ENCODE measurements at regions of chr16 and their contacts with region 1.

Region 1: DNA sequence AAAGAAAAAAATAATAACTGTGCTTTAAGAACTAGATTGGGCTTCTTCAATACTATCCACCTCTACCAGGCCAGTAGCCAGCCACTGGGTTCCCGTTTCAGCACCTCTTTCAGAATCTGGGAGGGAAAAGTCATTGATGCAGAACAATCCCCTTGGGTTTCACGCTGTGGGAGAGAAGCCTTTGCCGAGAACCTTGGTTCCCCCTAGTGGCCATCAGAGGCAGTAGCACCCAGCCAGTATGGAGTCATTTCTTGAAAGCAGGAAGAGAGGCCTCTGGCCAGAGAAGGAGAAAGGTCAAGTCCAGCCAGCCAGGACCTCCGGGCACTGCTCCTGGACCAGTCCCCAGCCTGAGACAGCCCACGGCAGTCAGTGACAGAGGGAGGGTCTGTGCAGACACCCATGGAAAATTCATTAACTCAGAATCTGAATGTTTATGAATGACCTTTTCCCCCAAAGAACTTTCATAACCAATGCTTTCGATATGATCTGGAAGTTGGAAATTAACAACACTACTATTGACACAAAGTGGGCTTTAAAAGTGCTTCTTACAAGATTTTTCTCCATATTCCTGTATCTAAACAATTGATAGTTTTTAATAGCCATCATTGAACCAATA is 51.2 kb upstream of the CDH5 start:
- DNase-seq: peak; percentile 63
- ATAC-seq: peak; percentile 88
- H3K4me3 Mint-ChIP-seq: no peak overlapping the region
- H3K27ac Mint-ChIP-seq: no peak overlapping the region
- H3K4me1 Mint-ChIP-seq: peaks cover 4% of the 10 kb centered on the region
- H3K27me3 Mint-ChIP-seq: peaks cover 11% of the 10 kb centered on the region

Region 2: DNA sequence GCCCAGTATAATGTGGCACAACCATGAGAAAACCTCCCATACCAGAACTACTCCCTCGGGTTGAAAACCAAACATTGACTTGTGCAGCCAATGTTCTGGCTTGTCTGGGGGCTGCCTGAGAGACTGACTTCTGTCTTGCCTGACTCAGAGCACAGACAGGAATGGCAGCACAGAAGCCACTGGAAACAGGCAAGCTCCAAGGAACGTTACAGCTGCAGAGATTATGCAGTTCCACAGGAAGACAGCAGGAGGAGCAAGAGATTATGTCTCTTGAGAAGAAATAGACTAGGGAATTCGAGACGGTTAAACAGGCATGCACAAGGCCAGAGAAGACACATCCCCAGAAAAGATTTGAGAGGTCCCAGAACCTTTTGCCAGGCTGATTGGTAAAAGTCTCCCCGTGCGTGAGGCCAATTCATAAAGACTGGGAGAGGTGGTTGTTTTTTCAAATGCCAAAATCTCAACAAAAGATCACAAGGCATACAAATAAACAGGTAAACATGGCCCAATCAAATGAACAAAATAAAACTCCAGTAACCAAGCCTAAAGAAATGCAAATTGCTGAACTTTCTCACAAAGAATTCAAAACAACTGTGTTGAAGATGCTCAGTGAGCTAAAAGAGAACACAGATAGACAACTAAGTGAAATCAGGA is 39.4 kb before region 1 on chr16:
- CTCF ChIA-PET with region 1: interaction called, 10 read pairs
- POLR2A ChIA-PET with region 1: no interaction called
- intact Hi-C with region 1: loop called (anchors 1 kb)
- DNase-seq: peak; percentile 43
- ATAC-seq: no peak
- H3K4me3 Mint-ChIP-seq: no peak overlapping the region
- H3K27ac Mint-ChIP-seq: no peak overlapping the region
- H3K4me1 Mint-ChIP-seq: peaks cover 7% of the 10 kb centered on the region
- H3K27me3 Mint-ChIP-seq: peaks cover 24% of the 10 kb centered on the region

Region 3: DNA sequence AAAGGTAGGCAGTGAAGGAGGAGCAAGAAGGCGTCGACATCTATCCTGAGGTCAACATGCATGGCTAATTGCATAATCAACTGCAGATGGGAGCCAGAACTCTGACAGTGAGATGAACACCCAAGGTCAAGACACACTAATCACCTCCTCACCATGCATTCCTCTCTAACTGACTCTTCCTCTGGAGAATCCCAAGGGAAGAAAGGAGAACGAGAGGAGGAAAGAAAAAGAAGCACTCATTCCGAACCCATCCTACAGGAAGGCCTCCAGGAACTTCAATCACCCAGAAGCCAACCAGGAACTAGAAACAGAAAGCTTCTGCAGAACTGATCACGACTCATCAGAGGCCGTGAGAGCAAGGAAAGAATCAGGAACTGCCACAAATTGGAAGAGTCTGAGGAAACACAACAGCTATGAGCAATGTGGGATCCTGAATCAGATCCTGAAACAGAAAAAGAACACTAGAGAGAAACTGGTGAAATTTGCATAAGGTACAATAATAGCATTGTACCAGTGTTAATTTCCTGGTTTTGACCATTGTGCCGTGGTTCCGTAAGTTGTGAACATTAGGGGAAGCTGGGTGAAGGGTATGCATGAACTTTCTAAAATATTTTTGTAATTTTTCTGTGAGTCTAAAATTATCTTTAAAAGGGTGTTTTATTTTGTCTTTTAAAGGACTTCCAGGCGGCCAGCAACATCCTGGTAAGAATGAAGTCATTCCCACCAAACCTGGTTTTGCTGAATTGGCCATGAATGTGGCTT is 101.8 kb after region 1 on chr16:
- CTCF ChIA-PET with region 1: no interaction called
- POLR2A ChIA-PET with region 1: no interaction called
- intact Hi-C with region 1: no loop called
- DNase-seq: no peak
- ATAC-seq: no peak
- H3K4me3 Mint-ChIP-seq: no peak overlapping the region
- H3K27ac Mint-ChIP-seq: no peak overlapping the region
- H3K4me1 Mint-ChIP-seq: peaks cover 9% of the 10 kb centered on the region
- H3K27me3 Mint-ChIP-seq: no peaks in the 10 kb centered on the region